Ascending aorta (tissue), 2 donors: ENCODE measurements at regions of chr10 and their contacts with region 1.

Region 1: GRCh38 chr10:73096449-73097304 is at the start of gene P4HA1:
- DNase-seq: peak; percentile 96 to 100
- H3K4me3 ChIP-seq: peak within 1 kb of the TSS; percentile 87
- H3K27ac ChIP-seq: peak within 1 kb of the TSS; percentile 95 to 96
- H3K4me1 ChIP-seq: peaks cover 6 to 10% of the 10 kb centered on the region in 2 donors
- H3K27me3 ChIP-seq: no peaks in the 10 kb centered on the region
- CTCF ChIP-seq: peak; percentile 64 to 82 (median 69)
- total RNA-seq, gene P4HA1: 6.9 TPM

Region 2: GRCh38 chr10:72925951-72926465 is 170.7 kb before region 1 on chr10:
- intact Hi-C with region 1: no loop called
- DNase-seq: no peak
- H3K4me3 ChIP-seq: no peak overlapping the region
- H3K27ac ChIP-seq: no peak overlapping the region
- H3K4me1 ChIP-seq: no peaks in the 10 kb centered on the region
- H3K27me3 ChIP-seq: no peaks in the 10 kb centered on the region
- CTCF ChIP-seq: no peak

Region 3: GRCh38 chr10:73110345-73110849 is 13.7 kb after region 1 on chr10 and contains the start of gene NUDT13:
- intact Hi-C with region 1: loop called (anchors 1 kb)
- DNase-seq: peak in 1 of 2 donors; percentile 88
- H3K4me3 ChIP-seq: peak within 1 kb of the TSS; percentile 63 to 66
- H3K27ac ChIP-seq: peak within 1 kb of the TSS; percentile 81 to 88
- H3K4me1 ChIP-seq: no peaks in the 10 kb centered on the region
- H3K27me3 ChIP-seq: no peaks in the 10 kb centered on the region
- CTCF ChIP-seq: no peak
- total RNA-seq, gene NUDT13: 7.6 TPM

Region 4: DNA sequence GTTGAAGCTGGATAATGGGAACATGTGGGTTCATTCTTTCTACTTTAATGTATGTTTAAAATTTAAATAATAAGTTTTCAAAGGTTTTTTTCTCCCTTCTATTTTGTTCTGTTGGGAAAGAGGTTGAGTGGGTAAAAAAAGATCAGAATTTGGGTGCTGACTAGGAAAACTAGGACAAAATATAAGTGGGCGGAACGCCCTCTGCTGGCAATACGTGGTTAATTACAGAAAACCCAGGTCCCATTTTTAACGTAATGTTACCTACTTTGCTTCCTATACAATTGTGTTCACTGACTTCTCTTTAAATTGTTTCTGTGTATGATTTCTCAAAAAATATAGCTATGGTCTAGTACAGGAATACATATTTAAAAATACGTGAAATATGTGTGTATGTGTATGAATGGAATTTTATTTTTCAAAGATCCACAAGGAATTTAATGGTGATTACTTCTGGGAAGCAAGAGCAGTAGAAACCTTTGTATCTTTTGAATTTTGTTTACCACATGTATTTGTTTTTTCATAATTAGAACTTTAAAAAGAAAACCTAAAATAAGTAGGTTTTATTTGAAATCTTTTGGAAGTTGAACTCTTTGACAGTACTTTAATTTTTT is 62.5 kb after region 1 on chr10:
- intact Hi-C with region 1: loop called (anchors 2 kb)
- DNase-seq: peak in 1 of 2 donors; percentile 71
- H3K4me3 ChIP-seq: no peak overlapping the region
- H3K27ac ChIP-seq: no peak overlapping the region
- H3K4me1 ChIP-seq: peaks cover 0 to 2% of the 10 kb centered on the region in 2 donors
- H3K27me3 ChIP-seq: no peaks in the 10 kb centered on the region
- CTCF ChIP-seq: peak; percentile 59 to 77 (median 61)

Region 5: GRCh38 chr10:73167783-73168464 is 71.2 kb after region 1 on chr10 and contains the starts of genes ECD and FAM149B1:
- intact Hi-C with region 1: loop called (anchors 1 kb)
- DNase-seq: peak; percentile 84 to 97
- H3K4me3 ChIP-seq: peak within 1 kb of the TSS; percentile 82 to 88
- H3K27ac ChIP-seq: peak within 1 kb of the TSS; percentile 96 to 97
- H3K4me1 ChIP-seq: peaks cover 0 to 19% of the 10 kb centered on the region in 2 donors
- H3K27me3 ChIP-seq: no peaks in the 10 kb centered on the region
- CTCF ChIP-seq: peak in 2 of 3 experiments; percentile 30 to 49
- total RNA-seq, gene ECD: 6.2 TPM
- total RNA-seq, gene FAM149B1: 19.4 TPM

Region 6: DNA sequence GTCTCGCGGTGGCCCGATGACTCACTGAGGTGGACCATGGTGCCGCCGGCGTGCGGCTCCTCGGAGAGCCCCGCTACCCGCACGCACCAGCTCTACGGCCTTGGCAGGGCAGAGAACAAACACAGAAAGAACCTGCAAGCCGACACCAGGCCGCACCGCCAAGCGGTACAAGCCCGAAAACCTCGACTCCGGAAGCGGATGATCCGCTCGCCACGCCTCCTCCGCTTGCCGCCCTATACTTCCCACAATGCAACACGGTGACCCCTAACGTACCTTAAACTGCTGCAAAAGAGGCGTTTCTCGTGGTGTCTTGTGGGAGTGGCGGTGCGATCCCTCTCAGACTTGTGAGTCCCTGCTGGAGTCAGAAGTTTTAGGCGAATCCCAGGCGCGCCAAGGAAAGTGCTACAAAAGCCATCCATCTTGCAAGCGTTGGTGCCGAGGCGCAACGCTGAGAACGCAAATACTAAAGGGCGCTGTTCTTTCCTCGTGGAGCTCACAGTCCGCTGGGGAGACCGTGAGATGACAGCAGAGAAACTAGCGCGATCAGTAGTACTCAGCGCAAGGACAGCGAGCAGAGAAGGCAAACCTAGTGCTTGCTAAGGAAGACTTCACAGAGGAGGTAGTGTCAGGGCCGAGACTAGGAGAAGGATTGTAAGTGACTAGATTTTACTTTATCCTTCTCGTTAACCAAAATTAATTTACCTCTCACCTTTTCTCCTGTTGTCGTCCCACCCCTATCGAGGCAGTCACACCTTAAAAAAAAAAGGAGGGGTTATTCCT is 156.0 kb after region 1 on chr10 and contains the start of gene MRPS16:
- intact Hi-C with region 1: loop called (anchors 2 kb)
- DNase-seq: peak; percentile 88 to 98
- H3K4me3 ChIP-seq: peak within 1 kb of the TSS; percentile 74 to 89
- H3K27ac ChIP-seq: peak within 1 kb of the TSS; percentile 91 to 92
- H3K4me1 ChIP-seq: peaks cover 7 to 17% of the 10 kb centered on the region in 2 donors
- H3K27me3 ChIP-seq: no peaks in the 10 kb centered on the region
- CTCF ChIP-seq: no peak
- total RNA-seq, gene MRPS16: 44.5 TPM